Dendritic cell treated with granulocyte-macrophage colony-stimulating factor and Interleukin-4, amounts not matched to agents 40 ng/mL and 50 ng/mL, for 4 days (primary cell): ENCODE measurements at regions of chr2 and their contacts with region 1.

Region 1: DNA sequence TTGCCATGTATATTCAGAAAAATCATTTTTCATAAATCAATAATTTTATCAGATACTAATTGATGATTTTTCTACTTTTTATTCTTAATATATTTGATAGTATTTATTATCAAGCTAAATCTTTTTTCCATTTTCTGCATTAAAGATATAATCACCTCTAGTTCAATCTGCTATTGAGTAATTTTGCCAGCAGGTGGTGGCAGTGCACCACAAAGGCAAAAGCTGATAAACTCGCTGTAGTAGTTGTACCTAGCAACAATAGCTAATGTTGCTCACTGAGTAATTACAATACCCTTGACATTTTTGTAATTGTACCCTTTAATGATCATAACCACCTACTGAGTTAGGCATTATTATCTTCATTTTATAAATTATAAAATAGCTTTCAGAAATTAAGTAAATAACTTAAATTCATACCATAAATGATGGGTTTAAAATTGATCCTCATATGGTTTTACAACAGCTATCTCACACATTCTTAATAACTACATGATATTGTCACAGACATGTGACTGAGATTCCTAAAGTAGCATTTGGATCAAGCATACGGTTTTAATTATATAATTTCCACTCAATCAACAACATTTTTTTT is 52.0 kb upstream of the CALCRL start:
- H3K4me3 Mint-ChIP-seq: no peak overlapping the region
- H3K27ac Mint-ChIP-seq: no peak overlapping the region
- H3K4me1 Mint-ChIP-seq: peaks cover 11% of the 10 kb centered on the region
- H3K27me3 Mint-ChIP-seq: no peaks in the 10 kb centered on the region

Region 2: DNA sequence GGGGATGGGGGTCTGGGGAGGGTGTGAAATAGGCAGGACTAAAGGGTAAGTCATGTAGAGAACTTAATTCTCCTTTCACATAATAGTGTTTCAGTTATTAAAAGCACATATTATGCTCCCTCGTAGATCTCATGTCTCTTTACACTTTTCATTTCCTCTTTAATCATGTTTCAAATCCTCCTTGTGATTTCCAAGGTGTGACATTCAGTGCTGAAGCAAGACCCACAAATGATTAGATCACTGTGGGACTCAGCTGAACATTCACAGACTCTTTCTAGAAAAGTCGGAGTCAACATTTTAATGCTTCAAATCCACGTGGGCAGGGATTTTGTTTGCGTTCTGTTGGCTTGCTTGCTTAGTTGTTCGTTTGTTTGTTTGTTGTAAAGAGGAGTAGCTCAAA is 17.2 kb before region 1 on chr2:
- intact Hi-C with region 1: no loop called
- H3K4me3 Mint-ChIP-seq: no peak overlapping the region
- H3K27ac Mint-ChIP-seq: no peak overlapping the region
- H3K4me1 Mint-ChIP-seq: peaks cover 9% of the 10 kb centered on the region
- H3K27me3 Mint-ChIP-seq: no peaks in the 10 kb centered on the region

Region 3: GRCh38 chr2:188369365-188369764 is 869.3 kb after region 1 on chr2:
- intact Hi-C with region 1: loop called (anchors 5 kb)
- H3K4me3 Mint-ChIP-seq: no peak overlapping the region
- H3K27ac Mint-ChIP-seq: no peak overlapping the region
- H3K4me1 Mint-ChIP-seq: no peaks in the 10 kb centered on the region
- H3K27me3 Mint-ChIP-seq: no peaks in the 10 kb centered on the region

Region 4: GRCh38 chr2:188512456-188512855 is 1012.4 kb after region 1 on chr2:
- intact Hi-C with region 1: loop called (anchors 2 kb)
- H3K4me3 Mint-ChIP-seq: no peak overlapping the region
- H3K27ac Mint-ChIP-seq: no peak overlapping the region
- H3K4me1 Mint-ChIP-seq: no peaks in the 10 kb centered on the region
- H3K27me3 Mint-ChIP-seq: no peaks in the 10 kb centered on the region